ENCODE measurements at regions of chr10 and their contacts with region 1.

Region 1: GRCh38 chr10:52740913-52741675 is 31.5 kb downstream of the MBL2 start:
- DNase-seq: no peak
- H3K4me3 ChIP-seq: no peak overlapping the region
- H3K27me3 ChIP-seq: no peaks in the 10 kb centered on the region
- CTCF ChIP-seq: peak; percentile 92

Region 2: GRCh38 chr10:52376694-52377354 is 364.3 kb before region 1 on chr10:
- CTCF ChIA-PET with region 1: no interaction called
- POLR2A ChIA-PET with region 1: no interaction called
- DNase-seq: no peak
- H3K4me3 ChIP-seq: no peak overlapping the region
- H3K27me3 ChIP-seq: no peaks in the 10 kb centered on the region
- CTCF ChIP-seq: no peak

Region 3: DNA sequence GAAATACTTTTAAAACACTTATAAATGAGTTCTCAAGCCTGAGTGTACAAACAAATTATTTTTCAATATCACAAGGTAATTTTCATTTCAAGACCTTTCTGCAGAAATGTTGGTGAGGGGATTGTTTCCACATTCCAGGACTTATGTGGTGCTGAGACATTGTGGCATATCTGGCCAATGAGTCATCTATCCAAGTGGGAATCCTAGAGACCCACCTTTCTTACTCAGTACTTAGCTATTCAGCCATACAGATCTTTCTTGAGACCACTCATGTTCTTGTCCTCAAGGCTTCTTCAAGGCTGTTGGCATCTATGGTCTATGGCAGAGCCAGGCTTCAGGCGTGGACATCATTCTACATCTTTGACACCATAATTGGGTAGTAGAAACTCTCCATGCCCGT is 201.6 kb before region 1 on chr10:
- CTCF ChIA-PET with region 1: no interaction called
- POLR2A ChIA-PET with region 1: no interaction called
- DNase-seq: no peak
- H3K4me3 ChIP-seq: no peak overlapping the region
- H3K27me3 ChIP-seq: no peaks in the 10 kb centered on the region
- CTCF ChIP-seq: no peak

Region 4: DNA sequence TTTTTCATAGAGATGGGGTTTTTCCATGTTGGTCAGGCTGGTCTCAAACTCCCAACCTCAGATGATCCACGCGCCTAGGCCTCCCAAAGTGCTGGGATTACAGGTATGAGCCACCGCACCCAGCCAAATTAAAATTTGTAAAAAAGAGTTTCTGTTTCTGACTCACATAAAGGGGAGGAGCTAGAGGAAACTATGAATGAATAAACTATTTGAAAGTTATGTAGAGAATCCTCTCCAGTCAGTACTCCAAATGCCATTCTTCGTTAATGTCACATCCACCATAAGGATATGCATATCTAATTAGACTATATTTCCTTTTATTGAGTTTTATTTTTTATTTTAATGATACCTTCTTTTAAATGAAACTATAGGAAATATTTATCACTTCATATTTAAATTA is 21.1 kb before region 1 on chr10:
- CTCF ChIA-PET with region 1: interaction called, 13 read pairs
- POLR2A ChIA-PET with region 1: no interaction called
- DNase-seq: no peak
- H3K4me3 ChIP-seq: no peak overlapping the region
- H3K27me3 ChIP-seq: no peaks in the 10 kb centered on the region
- CTCF ChIP-seq: no peak

Region 5: GRCh38 chr10:52755297-52756062 is 14.4 kb after region 1 on chr10:
- CTCF ChIA-PET with region 1: interaction called, 12 read pairs
- POLR2A ChIA-PET with region 1: no interaction called
- DNase-seq: peak; percentile 31
- H3K4me3 ChIP-seq: no peak overlapping the region
- H3K27me3 ChIP-seq: no peaks in the 10 kb centered on the region; the same call in none of the 2 replicates
- CTCF ChIP-seq: no peak

Region 6: GRCh38 chr10:52762088-52762487 is 21.0 kb after region 1 on chr10:
- CTCF ChIA-PET with region 1: interaction called, 13 read pairs
- POLR2A ChIA-PET with region 1: no interaction called
- DNase-seq: no peak
- H3K4me3 ChIP-seq: no peak overlapping the region
- H3K27me3 ChIP-seq: no peaks in the 10 kb centered on the region
- CTCF ChIP-seq: no peak

Region 7: DNA sequence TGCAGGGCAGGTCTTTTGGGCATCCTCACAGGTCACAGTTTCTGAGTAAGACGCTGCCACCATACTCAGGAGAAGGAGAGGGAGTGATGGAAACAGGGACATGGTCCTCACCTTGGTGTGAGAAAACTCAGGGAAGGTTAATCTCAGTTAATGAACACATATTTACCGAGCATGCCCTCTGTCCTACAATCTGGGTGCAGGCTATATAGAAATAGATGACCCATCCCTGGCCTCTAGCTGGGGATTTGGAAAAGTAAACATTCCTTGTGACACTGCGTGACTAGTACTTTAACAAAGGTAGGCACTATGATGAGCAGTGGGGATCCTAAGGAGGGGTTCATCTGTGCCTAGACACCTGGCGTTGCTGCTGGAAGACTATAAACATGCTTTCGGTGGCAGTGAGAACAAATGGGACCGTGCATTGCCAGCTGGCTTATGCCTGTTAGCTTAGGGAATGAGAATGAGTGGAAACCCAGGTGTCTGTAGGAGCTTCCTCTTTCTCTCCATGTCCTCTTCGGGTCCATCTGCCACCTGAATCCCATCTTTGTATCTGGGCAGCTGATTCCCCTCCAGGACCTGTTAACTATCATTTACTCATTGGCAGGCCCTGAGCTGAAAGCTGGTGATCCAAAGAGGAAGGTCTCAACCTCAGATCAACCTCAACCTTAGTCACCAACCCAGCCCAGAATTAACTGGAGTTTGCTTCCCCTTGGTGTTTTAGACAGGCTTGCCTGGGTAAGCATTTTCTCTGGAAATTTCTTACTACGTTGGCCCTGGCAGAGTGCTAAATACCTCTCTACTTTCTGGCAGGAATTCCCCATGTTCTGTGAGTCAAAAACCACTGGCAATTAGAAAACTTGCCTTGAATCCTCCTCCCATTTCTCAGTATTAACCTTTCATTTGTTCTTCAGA is 30.7 kb after region 1 on chr10:
- CTCF ChIA-PET with region 1: interaction called, 336 read pairs
- POLR2A ChIA-PET with region 1: no interaction called
- DNase-seq: no peak
- H3K4me3 ChIP-seq: no peak overlapping the region
- H3K27me3 ChIP-seq: no peaks in the 10 kb centered on the region; the same call in 1 of the 2 replicates
- CTCF ChIP-seq: no peak

Region 8: DNA sequence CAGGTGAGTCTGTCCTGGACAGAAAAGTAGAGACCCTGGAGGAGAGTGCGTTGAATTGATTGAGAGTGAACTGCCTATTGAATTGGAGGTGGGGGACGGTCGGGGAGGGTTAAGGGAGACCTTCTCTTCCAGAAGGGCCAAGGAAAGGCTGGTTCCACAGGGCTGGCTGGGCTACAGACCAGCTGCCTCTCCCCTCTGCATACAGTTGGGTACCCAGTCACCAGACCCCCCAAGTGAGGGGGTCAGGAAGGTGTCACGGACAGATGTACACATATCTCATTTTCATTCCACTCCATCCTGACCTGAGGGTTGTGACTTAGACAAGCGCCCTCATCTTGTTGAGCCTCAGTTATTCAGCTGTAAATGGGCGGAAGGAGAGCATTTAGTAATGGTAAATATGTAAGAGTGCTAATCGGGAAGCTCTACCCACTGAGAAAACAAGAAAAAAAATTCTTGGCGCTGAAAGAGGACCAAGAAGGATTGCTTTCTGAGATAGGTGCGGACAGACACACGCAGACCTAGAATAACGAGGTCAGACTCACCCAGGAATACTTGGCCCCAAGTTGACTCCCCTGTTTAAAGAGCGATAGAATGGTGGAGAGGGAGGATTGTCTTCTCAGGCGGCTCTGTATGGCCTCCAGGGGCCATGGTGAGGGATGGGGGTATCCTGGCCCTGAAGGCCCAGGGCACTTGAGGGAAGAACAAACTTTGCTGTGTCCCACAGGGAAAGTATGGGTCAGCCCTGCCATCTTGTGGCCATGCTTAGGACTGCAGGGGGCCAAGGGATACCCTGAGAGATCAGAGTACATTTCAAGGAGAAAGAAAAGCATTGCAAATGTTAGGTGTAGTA is 38.7 kb after region 1 on chr10:
- CTCF ChIA-PET with region 1: interaction called, 336 read pairs
- POLR2A ChIA-PET with region 1: no interaction called
- DNase-seq: no peak
- H3K4me3 ChIP-seq: no peak overlapping the region
- H3K27me3 ChIP-seq: peaks cover 1% of the 10 kb centered on the region; the same call in 1 of the 2 replicates
- CTCF ChIP-seq: peak; percentile 98

Region 9: DNA sequence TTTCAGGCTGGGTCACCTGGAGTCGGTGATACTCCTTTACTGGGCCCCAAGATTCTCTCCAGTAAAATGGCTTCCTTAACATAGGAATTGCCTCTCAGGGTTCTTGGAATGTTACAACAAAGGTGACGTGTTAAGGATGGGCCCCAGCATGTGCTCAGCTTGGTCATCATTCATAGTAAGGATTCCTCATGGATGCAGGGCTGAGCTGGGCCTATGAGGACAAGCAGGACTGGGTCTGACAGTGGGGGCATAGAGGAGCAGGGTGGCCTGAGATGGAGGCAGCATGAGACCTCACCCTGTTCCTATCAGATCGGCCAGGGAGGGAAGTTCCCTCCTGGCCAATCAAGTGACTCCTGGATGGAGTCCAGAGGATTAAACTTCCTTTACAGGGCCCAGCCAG is 44.3 kb after region 1 on chr10:
- CTCF ChIA-PET with region 1: interaction called, 336 read pairs
- POLR2A ChIA-PET with region 1: no interaction called
- DNase-seq: no peak
- H3K4me3 ChIP-seq: no peak overlapping the region
- H3K27me3 ChIP-seq: no peaks in the 10 kb centered on the region; the same call in 1 of the 2 replicates
- CTCF ChIP-seq: no peak

Measured in BJ (cell line).